Heart left ventricle (tissue), 16 donors: ENCODE measurements at regions of chr1 and their contacts with region 1.

Region 1: DNA sequence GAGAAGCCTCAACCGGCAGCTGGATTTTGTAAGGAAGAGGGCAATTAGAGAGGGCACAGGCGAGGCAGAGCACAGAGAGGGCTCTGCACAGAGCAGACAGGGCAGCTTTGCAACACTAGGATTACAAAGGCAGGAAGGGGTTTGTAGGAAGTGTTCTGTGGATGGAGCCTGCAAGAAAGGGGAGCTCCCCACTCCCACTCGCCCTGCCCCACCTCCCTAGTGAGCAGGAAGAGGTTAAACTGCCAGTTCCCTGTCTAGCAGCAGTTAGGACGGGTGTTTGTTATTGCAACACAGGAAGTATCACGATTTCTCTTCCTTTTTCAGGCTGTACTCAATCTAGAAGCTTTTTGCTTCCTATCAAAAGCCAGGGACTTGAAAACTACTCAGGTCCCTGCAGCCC is 63.3 kb upstream of the LRRC8D start:
- DNase-seq: peak; percentile 44 to 71 (median 62)
- ATAC-seq: peak; percentile 47 to 75 (median 70)
- H3K4me3 ChIP-seq: peak overlapping the region in 6 of 12 donors; percentile 4 to 35 (median 14)
- H3K27ac ChIP-seq: peak overlapping the region in 11 of 12 donors; percentile 8 to 85 (median 61)
- H3K4me1 ChIP-seq: peaks cover 0 to 94% (median 36%) of the 10 kb centered on the region in 12 donors
- H3K27me3 ChIP-seq: no peaks in the 10 kb centered on the region
- CTCF ChIP-seq: no peak
- POLR2A ChIP-seq: no peak

Region 2: GRCh38 chr1:89719502-89720306 is 37.8 kb before region 1 on chr1:
- intact Hi-C with region 1: loop called in 5 of 10 experiments (anchors 5 kb)
- DNase-seq: no peak
- ATAC-seq: no peak
- H3K4me3 ChIP-seq: peak overlapping the region in 1 of 12 donors; percentile 2
- H3K27ac ChIP-seq: peak overlapping the region in 8 of 12 donors; percentile 2 to 81 (median 26)
- H3K4me1 ChIP-seq: peaks cover 3 to 79% (median 33%) of the 10 kb centered on the region in 12 donors
- H3K27me3 ChIP-seq: no peaks in the 10 kb centered on the region
- CTCF ChIP-seq: no peak
- POLR2A ChIP-seq: no peak

Region 3: DNA sequence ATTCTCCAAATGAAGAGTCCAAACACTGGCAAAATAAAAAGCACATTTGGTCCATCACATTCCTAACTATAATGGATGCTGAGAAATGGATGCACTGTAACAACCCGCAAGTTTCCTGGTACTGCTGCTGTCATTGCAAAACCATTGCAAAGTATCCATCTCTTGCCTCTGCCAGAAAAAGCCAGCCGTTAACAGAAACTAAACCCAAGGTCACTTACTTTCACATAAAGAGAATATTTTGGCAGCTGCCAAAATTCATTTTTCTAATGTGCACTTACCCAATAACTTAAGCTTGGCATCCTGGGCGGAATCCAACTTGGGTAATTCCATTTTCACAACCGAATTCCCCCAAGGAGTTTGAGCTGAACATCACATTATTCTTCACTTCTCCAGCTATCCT is 13.7 kb before region 1 on chr1:
- intact Hi-C with region 1: loop called in 1 of 10 experiments (anchors 1 kb)
- DNase-seq: no peak
- ATAC-seq: no peak
- H3K4me3 ChIP-seq: no peak overlapping the region
- H3K27ac ChIP-seq: no peak overlapping the region
- H3K4me1 ChIP-seq: peaks cover 0 to 15% (median 5%) of the 10 kb centered on the region in 12 donors
- H3K27me3 ChIP-seq: no peaks in the 10 kb centered on the region
- CTCF ChIP-seq: no peak
- POLR2A ChIP-seq: no peak